ENCODE measurements at regions of chr1 and their contacts with region 1.

Region 1: GRCh38 chr1:12658531-12659453 is 14.9 kb downstream of the AADACL4 start:
- DNase-seq: peak; percentile 62 to 64
- H3K4me3 ChIP-seq: no peak overlapping the region
- H3K27ac ChIP-seq: no peak overlapping the region
- H3K4me1 ChIP-seq: no peaks in the 10 kb centered on the region
- H3K27me3 ChIP-seq: no peaks in the 10 kb centered on the region
- CTCF ChIP-seq: peak; percentile 88

Region 2: GRCh38 chr1:12314333-12314903 is 344.4 kb before region 1 on chr1:
- CTCF ChIA-PET with region 1: interaction called, 3 read pairs
- POLR2A ChIA-PET with region 1: no interaction called
- intact Hi-C with region 1: loop called (anchors 1 kb)
- DNase-seq: no peak
- H3K4me3 ChIP-seq: no peak overlapping the region
- H3K27ac ChIP-seq: no peak overlapping the region
- H3K4me1 ChIP-seq: peaks cover 10% of the 10 kb centered on the region
- H3K27me3 ChIP-seq: no peaks in the 10 kb centered on the region
- CTCF ChIP-seq: peak; percentile 72

Measured in PC-9 (cell line).